Breast epithelium (tissue), 4 donors: ENCODE measurements at regions of chr21 and their contacts with region 1.

Region 1: GRCh38 chr21:41207401-41208068 is 39.6 kb downstream of the BACE2 start:
- DNase-seq: peak in 1 of 2 donors; percentile 70
- H3K4me3 ChIP-seq: peak overlapping the region in 2 of 3 donors; percentile 16 to 43
- H3K27ac ChIP-seq: peak overlapping the region; percentile 74 to 80
- H3K4me1 ChIP-seq: peaks cover 0 to 2% of the 10 kb centered on the region in 2 donors
- H3K27me3 ChIP-seq: no peaks in the 10 kb centered on the region
- CTCF ChIP-seq: no peak
- POLR2A ChIP-seq: no peak

Region 2: GRCh38 chr21:40985370-40985769 is 222.2 kb before region 1 on chr21:
- intact Hi-C with region 1: no loop called
- DNase-seq: no peak
- H3K4me3 ChIP-seq: no peak overlapping the region
- H3K27ac ChIP-seq: no peak overlapping the region
- H3K4me1 ChIP-seq: no peaks in the 10 kb centered on the region
- H3K27me3 ChIP-seq: no peaks in the 10 kb centered on the region
- CTCF ChIP-seq: no peak
- POLR2A ChIP-seq: no peak

Region 3: DNA sequence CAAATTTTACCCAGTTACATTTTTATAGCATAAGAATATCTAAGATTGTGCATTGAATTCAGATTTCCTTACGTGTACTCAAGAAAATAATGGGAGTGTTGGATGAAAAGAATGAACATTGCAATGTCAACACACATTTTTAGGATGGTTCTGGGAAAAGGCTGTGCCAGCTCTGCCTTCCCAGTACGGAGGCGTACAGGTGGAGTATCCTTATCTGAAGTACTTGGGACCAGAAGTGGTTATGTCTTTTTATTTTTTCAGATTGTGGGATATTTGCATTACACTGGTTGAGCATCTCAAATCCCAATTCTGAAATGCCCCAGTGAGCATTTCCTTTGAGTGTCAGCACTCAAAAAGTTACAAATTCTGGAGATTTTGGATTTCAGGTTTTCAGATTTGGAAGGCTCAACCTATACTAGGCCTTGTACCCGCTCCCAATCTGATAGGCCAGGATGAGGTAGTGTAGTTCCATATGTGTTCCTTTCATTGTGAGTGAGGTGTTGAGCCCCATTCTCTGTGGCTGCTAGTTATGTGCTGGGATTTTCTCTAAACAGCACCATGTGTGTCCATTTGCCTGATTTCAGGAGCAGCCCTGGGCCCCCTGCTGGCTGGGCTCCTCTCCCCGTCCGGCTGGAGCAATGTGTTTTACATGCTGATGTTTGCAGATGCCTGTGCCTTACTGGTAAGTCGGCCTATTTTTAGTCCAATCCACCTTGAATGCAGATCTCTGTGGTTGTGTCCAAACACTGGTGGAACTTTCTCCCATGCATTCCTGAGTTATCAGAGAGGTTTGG is 1366.9 kb after region 1 on chr21:
- intact Hi-C with region 1: loop called (anchors 10 kb)
- DNase-seq: peak in 1 of 2 donors; percentile 14
- H3K4me3 ChIP-seq: no peak overlapping the region
- H3K27ac ChIP-seq: no peak overlapping the region
- H3K4me1 ChIP-seq: no peaks in the 10 kb centered on the region
- H3K27me3 ChIP-seq: no peaks in the 10 kb centered on the region
- CTCF ChIP-seq: no peak
- POLR2A ChIP-seq: no peak